ENCODE measurements at regions of chr19 and their contacts with region 1.

Region 1: GRCh38 chr19:38634757-38635482 is 12.5 kb upstream of the ACTN4 start:
- DNase-seq: peak; percentile 89
- ATAC-seq: peak; percentile 57

Region 2: DNA sequence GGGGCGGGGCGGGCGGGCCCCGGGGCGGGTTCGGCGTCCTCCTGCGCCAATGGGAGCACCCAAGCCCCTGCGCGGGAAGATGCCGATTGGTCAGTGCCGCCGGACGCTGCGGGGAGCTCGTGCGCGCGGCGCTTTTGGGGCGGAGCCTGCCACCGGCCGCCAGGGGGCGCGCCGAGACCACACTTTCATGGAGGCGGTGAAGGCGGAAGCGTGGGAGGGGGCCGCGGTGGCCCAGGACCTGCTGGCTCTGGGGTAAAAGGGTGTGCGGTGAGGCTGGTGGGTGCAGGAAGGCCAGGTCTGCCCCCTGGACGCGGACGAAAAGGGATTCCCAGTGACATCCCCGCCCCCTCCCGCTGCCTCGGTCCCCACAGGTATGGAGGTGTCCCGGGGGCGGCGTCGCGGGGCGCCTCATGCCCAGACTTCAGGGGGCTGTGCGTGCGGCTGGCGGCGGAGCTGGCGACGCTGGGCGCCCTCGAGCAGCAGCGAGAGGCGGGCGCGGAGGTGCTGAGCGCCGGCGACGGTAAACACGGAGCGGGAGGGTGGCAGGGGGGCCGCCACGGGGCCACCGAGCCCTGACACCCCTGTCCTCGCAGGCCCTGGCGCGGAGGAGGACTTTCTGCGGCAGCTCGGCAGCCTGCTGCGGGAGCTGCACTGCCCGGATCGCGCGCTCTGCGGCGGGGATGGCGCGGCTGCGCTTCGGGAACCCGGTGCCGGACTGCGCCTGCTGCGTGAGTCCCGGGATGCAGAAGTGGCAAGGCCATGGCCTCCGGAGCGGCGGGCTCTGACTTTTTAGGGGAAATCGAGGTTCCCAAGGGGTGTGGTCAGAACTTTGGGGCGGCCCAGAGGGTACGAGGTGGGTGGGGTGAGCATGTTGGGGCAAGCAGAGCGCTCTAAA is 231.7 kb before region 1 on chr19 and contains the start of gene FAM98C:
- intact Hi-C with region 1: loop called (anchors 2 kb)
- DNase-seq: peak; percentile 98
- ATAC-seq: peak; percentile 99
- total RNA-seq, gene FAM98C: 15.1 TPM

Region 3: GRCh38 chr19:38676023-38676877 is 41.3 kb after region 1 on chr19:
- intact Hi-C with region 1: no loop called
- DNase-seq: peak; percentile 37
- ATAC-seq: no peak